Tibial artery (tissue), 4 donors: ENCODE measurements at regions of chr12 and their contacts with region 1.

Region 1: DNA sequence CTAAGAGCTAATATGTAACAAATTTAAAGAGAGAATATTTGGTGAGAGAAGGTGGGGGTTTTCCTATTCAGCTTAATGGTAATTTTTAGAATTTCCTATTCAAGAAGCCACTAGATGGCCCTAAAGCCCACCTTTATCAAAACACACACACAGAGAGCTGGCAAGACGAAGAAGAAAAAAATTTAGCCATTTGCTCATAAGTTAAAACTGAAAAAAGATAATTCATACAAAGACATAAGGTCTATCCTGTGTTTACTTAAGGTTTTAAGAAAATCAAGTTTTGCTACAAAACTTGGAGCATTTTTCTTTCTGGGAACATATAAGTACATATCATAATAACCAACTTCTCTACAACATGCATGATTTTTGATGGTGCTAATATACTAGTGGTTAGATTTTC is 46.8 kb upstream of the PCED1B start:
- DNase-seq: no peak
- H3K4me3 ChIP-seq: peak overlapping the region in 1 of 2 donors; percentile 11
- H3K27ac ChIP-seq: peak overlapping the region; percentile 48 to 62
- H3K4me1 ChIP-seq: peaks cover 0 to 18% (median 11%) of the 10 kb centered on the region in 4 donors
- H3K27me3 ChIP-seq: no peaks in the 10 kb centered on the region
- CTCF ChIP-seq: peak; percentile 51 to 85

Region 2: DNA sequence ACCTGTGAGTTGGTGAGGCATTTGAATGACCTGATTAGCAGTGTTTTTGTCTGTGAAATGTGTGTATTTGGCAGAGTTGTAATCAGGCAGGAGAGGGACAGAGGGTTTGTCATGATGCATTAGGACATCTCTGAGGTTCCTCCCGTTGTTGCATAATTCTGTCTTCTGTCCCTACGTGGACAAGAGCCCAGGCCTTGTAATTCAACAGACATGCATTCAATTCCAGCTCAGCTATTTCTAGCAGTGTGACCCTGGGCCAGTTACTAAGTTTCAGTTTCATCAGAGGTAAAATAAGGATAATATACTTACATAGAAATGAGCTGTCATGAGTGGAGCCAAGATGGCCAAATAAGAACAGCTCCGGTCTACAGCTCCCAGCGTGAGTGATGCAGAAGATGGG is 415.5 kb before region 1 on chr12:
- intact Hi-C with region 1: no loop called
- DNase-seq: peak; percentile 76 to 83
- H3K4me3 ChIP-seq: no peak overlapping the region
- H3K27ac ChIP-seq: peak overlapping the region; percentile 46 to 57
- H3K4me1 ChIP-seq: peaks cover 0 to 20% (median 11%) of the 10 kb centered on the region in 4 donors
- H3K27me3 ChIP-seq: no peaks in the 10 kb centered on the region
- CTCF ChIP-seq: no peak

Region 3: DNA sequence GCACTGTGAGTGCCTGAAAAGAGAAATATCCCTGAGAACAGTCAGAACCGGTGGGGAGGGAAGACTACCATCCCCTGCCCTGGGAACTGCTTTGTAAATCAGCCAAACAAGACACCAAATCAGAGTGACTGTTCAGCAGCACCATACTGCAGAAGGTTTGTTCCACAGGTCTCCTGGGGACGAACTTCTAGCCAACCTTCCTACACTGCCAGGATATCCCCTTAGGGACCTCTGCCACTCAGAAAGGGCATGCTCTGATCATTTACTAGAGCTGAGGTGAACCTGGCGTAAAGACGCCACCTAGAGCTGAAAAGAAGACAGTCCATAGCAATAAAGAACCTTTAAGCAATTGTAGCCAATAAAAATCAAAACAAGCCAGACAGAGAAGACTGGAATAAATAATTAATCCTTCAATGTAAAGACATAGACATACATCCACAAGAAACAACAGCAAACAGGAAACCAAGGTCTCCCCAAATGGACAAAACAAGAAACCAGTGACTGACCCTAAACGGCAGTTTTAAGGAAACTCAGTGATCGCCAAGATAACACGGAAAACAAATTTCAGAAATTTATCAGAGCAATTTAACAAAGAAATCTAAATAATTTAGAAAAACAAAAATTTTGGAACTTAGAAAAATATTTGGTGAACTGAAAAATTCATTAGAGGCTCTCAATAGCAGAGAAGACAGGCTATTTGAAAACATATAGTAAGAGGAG is 275.2 kb after region 1 on chr12:
- intact Hi-C with region 1: loop called (anchors 5 kb)
- DNase-seq: peak; percentile 38 to 70
- H3K4me3 ChIP-seq: no peak overlapping the region
- H3K27ac ChIP-seq: no peak overlapping the region
- H3K4me1 ChIP-seq: no peaks in the 10 kb centered on the region
- H3K27me3 ChIP-seq: no peaks in the 10 kb centered on the region
- CTCF ChIP-seq: peak; percentile 43 to 52

Region 4: DNA sequence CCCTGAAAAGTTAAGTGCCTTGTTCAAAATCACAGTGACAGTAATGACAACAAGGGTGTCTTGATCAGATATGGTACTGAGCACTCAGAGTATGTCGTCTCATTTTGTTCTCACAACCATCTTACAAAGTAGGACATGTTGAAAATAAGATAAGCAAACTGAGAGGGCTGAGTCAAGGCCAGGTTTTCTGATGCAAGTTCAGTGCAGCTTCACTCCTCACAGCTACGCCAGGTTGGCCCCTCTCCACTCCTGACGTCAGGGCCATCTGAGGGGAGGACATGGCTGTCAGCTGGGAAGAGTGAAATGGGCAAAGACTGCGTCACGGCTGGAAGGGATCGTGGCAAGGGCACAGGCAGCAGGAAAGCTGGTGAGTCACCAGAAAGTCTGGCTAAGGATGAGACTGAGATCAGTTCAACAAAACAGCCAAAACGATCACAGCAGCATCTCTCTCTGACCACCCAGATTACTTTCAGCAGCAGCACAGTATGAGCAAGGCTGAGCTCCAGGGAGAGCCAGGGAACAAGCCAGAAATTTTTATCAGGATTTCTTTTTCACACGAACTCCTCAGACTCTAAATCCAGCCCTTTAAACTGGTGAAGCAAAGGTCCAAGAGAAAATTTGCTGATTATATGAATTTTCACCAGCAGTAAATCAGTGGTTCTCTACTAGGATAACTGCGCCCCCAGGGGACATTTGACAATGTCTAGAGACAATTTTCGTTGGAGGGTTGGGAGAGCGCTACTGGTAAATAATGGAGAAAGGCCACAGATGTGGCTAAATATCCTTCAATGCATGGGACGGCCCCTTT is 345.0 kb after region 1 on chr12:
- intact Hi-C with region 1: loop called (anchors 10 kb)
- DNase-seq: peak; percentile 89 to 99
- H3K4me3 ChIP-seq: peak overlapping the region in 1 of 2 donors; percentile 17
- H3K27ac ChIP-seq: peak overlapping the region; percentile 65 to 79
- H3K4me1 ChIP-seq: peaks cover 0 to 18% (median 10%) of the 10 kb centered on the region in 4 donors
- H3K27me3 ChIP-seq: no peaks in the 10 kb centered on the region
- CTCF ChIP-seq: no peak

Region 5: GRCh38 chr12:47391566-47391965 is 358.9 kb after region 1 on chr12:
- intact Hi-C with region 1: no loop called
- DNase-seq: no peak
- H3K4me3 ChIP-seq: no peak overlapping the region
- H3K27ac ChIP-seq: no peak overlapping the region
- H3K4me1 ChIP-seq: peaks cover 0 to 13% (median 7%) of the 10 kb centered on the region in 4 donors
- H3K27me3 ChIP-seq: no peaks in the 10 kb centered on the region
- CTCF ChIP-seq: no peak